Gastrocnemius medialis (tissue), 4 donors: ENCODE measurements at regions of chr9 and their contacts with region 1.

Region 1: DNA sequence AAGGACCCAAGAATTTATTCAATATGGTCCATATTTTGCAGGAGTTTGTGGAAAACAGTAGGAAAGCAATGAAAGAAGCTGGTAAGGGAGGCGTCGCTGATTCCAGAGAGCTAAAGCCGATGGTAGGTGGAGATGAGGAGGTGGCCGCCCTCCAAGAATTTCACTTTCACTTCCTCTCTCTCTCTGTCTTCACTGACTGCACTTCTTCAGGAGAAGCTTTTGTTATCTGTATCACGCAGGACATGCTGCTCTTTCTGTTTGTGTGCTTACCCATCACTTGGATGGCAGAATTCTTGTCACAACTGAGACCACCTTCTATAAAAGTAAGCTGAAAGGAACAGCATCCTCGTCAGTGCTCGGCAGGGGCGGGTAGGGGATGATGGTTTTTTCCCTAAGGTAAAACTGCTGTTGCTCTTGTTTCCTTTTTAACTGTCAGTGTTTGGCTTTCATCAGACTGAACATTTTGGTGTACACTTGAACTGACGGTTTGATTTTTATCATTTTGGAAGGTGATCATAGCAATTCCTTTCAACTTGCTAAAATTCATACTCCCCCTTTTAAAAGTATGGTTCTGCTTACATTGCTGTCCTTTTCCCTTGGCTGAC is 62.4 kb upstream of the FSD1L start:
- DNase-seq: peak; percentile 5 to 22
- ATAC-seq: no peak
- H3K4me3 ChIP-seq: no peak overlapping the region
- H3K27ac ChIP-seq: no peak overlapping the region
- H3K4me1 ChIP-seq: no peaks in the 10 kb centered on the region
- H3K27me3 ChIP-seq: no peaks in the 10 kb centered on the region
- CTCF ChIP-seq: no peak
- POLR2A ChIP-seq: no peak

Region 2: GRCh38 chr9:105299190-105299854 is 86.2 kb before region 1 on chr9:
- in situ Hi-C with region 1: loop called in 1 of 4 experiments (anchors 25 kb)
- intact Hi-C with region 1: no loop called
- DNase-seq: no peak
- ATAC-seq: no peak
- H3K4me3 ChIP-seq: no peak overlapping the region
- H3K27ac ChIP-seq: no peak overlapping the region
- H3K4me1 ChIP-seq: no peaks in the 10 kb centered on the region
- H3K27me3 ChIP-seq: no peaks in the 10 kb centered on the region
- CTCF ChIP-seq: no peak
- POLR2A ChIP-seq: peak in 1 of 2 donors; percentile 15

Region 3: DNA sequence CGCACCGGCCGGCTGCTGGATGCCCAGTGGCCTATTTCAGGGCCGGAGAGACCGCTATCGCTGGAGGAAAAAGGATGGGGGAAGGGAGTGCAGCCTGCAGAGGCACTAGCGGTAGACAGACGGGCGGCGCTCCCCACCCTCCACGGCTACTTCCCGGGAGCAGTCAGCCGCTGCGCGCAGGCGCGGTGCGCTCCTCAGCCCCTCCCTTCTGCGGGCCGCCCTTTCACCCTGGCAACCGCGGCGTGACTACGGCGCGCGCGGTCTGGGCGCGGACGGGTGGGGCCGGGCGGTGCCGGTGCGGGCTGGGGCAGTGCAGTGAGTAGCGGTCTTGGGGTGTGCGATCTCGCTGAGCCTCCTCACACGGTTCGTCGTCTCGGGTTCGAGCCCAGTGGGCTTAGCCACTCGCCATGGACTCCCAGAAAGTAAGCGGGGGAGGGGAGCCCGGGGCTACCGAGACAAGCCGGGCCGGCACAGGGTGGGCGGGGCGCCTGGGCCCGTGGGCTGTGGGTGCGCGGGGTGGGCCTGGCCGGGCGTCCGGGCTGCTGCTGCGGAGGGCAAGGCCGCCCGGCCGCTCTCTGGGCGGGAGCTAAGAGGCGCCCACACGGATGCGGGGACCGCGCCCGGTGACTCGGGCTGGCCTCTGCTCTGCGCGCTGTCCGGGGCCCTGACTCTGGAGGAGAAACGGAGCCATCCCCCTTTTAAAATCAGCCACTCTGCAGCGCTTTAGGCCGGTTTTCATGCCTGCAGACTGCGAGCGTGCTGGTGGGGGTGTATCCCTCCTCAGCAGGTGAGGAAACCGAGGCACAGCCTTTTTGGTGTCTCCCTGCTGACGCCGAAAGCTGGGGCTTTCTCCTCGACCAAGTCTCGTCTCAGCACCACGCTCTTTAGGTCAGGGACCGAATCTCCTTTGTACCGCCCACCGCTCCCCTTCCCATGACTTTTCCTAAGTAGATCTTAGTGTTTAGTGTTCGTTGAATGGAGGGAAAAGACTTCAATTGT is 62.6 kb after region 1 on chr9 and contains the start of gene FSD1L:
- in situ Hi-C with region 1: no loop called
- intact Hi-C with region 1: no loop called
- DNase-seq: peak; percentile 88 to 94
- ATAC-seq: peak; percentile 57 to 66
- H3K4me3 ChIP-seq: peak within 1 kb of the TSS; percentile 70 to 94 (median 74)
- H3K27ac ChIP-seq: peak within 1 kb of the TSS; percentile 93 to 96 (median 95)
- H3K4me1 ChIP-seq: peaks cover 49 to 60% of the 10 kb centered on the region in 2 donors
- H3K27me3 ChIP-seq: no peaks in the 10 kb centered on the region
- CTCF ChIP-seq: peak in 2 of 5 experiments; percentile 8 to 32
- POLR2A ChIP-seq: peak; percentile 86 to 97
- total RNA-seq, gene FSD1L: 8.5 to 19.6 (median 12.4) TPM